IMR-90 (cell line): ENCODE measurements at regions of chr14 and their contacts with region 1.

Region 1: DNA sequence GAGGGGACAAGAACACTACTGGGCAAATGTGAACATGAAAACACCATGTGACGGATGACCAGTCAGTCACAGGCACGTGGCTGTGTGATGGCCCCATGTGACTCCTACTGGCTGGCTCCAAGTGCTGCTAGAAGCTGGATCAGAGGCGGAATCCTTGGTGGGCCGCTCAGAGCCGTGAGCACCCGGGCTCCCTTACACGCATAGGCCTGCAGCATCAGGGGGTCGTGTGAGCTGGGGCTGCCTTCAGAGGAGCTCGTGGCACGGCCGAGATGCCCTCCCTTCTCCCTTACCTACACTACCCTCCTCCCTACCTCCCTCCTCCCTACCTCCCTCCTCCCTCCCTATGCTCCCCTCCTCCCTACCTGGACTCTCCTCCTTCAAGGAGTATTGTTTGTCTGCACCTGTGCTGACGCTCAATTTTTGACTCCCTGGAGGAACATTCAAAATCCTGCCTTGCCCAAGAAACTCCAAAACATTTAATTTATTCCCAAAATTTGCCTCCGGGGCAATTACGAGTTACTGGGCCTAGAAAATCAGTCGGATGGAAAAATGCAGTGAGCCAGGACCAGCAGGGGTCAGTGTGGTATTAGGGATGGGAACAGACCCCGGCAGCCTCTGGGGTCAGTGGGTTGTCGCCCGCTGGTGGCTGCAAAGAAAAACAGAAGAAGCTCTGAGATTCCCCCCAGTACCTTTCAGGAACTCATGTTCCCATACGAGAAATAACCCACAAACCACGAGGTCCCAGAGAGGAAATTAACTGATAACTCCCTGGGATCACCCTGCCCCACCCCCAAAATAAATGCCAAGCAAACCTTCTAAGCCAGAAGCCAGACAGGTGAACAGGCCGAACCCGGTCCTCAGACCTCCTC is 61.2 kb downstream of the C14orf132 start:
- DNase-seq: peak; percentile 83
- ATAC-seq: peak; percentile 28
- H3K4me3 ChIP-seq: no peak overlapping the region
- H3K27ac ChIP-seq: peak overlapping the region; percentile 60
- H3K4me1 ChIP-seq: peaks cover 21% of the 10 kb centered on the region
- H3K27me3 ChIP-seq: no peaks in the 10 kb centered on the region
- CTCF ChIP-seq: peak; percentile 99
- POLR2A ChIP-seq: peak; percentile 76
- RAD21 ChIP-seq: peak; percentile 100

Region 2: DNA sequence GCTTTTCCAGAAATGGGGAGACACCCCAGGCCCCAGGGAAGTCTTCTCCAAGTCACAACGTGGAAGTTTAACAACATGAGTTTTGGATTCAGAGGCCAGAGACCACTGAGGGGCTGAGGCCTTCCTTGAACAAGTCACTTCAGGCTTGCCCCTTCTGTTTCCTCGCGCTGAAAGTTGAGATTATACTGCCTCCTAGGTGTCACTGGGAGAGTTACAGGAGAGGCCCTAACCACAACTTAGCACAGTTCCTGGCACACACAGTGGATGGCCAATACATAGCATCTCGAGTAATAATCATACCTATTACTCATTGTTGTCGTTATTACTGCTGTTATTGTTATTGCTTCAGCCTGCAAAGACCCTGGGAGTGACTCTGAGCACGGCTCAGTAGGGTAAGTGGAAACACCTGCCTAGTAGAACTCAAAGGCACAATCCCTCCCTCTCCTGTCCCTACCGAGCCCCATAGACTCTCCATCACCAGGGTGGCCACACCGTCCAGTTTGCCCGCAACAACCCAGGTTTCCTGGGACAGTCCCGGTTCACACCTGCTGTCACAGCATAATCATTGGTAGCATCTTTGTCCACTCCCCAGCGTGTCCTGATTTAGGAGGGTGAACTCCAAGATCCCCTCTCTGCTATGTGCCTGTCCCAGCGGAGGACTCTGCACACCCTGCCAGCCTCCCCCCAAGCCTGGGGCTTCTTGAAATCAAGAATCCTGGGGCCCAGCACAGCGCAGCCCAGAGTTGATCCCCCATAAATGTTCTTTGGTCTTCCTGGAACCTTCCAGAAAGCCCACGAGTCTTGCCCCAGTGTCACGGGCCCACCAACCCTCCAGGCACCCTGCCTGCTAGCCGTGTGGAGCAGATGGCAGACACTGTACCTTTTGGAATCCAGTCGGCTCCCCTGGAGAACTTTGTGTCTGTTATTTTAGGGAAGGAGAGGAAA is 668.9 kb before region 1 on chr14:
- CTCF ChIA-PET with region 1: no interaction called
- POLR2A ChIA-PET with region 1: no interaction called
- dilution Hi-C with region 1: no loop called
- in situ Hi-C with region 1: no loop called
- intact Hi-C with region 1: no loop called
- DNase-seq: peak; percentile 17
- ATAC-seq: no peak
- H3K4me3 ChIP-seq: no peak overlapping the region
- H3K27ac ChIP-seq: no peak overlapping the region
- H3K4me1 ChIP-seq: no peaks in the 10 kb centered on the region
- H3K27me3 ChIP-seq: no peaks in the 10 kb centered on the region
- CTCF ChIP-seq: peak; percentile 51
- POLR2A ChIP-seq: no peak
- RAD21 ChIP-seq: peak; percentile 37; the same call in 1 of the 2 replicates

Region 3: GRCh38 chr14:95993768-95994592 is 106.4 kb before region 1 on chr14:
- CTCF ChIA-PET with region 1: interaction called, 30 read pairs
- POLR2A ChIA-PET with region 1: no interaction called
- dilution Hi-C with region 1: no loop called
- in situ Hi-C with region 1: no loop called
- intact Hi-C with region 1: loop called (anchors 1 kb)
- DNase-seq: peak; percentile 53
- ATAC-seq: peak; percentile 82
- H3K4me3 ChIP-seq: no peak overlapping the region
- H3K27ac ChIP-seq: no peak overlapping the region
- H3K4me1 ChIP-seq: no peaks in the 10 kb centered on the region
- H3K27me3 ChIP-seq: peaks cover 18% of the 10 kb centered on the region
- CTCF ChIP-seq: peak; percentile 89
- POLR2A ChIP-seq: no peak
- RAD21 ChIP-seq: peak; percentile 88

Region 4: DNA sequence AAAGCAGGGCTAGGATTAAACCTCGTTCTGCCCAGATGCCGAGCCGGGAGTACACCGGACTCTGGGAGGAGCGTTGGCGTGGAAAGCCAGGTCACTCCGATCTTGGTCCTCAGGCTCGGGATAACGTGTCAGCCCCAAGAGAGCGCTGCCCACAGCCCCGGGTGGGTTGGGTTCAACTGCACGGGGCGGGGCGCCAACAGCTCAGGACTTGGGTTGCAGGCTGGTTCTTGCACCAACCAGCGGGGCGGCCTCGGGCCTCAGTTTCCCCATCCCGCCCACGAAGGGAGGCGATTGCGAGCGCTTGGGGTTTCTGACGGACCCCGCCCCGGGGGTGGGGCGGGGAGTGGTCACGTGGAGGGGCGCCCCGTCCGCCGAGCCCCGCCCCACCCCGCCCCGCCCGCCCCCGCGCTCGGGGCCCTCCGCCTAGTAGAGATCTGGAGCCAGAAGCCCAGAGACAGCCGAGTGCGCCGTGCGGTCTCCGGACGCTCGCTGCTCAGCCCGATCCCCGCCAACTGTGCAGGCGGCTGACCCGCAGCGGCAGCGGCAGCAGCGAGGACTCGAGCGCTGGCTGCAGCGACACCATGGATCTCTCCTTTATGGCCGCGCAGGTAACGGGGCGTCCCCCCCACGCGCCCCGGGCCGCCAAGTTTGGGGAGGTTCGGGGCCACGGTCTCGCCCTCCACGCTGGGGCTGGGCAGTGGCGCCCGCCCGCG is 61.3 kb before region 1 on chr14 and contains the start of gene C14orf132:
- CTCF ChIA-PET with region 1: interaction called, 4 read pairs
- POLR2A ChIA-PET with region 1: no interaction called
- dilution Hi-C with region 1: no loop called
- in situ Hi-C with region 1: loop called (anchors 5 kb)
- intact Hi-C with region 1: loop called (anchors 2 kb)
- DNase-seq: peak; percentile 48
- ATAC-seq: peak; percentile 93
- H3K4me3 ChIP-seq: peak within 1 kb of the TSS; percentile 98
- H3K27ac ChIP-seq: peak within 1 kb of the TSS; percentile 68
- H3K4me1 ChIP-seq: peaks cover 12% of the 10 kb centered on the region; the same call in 1 of the 2 replicates
- H3K27me3 ChIP-seq: peaks cover 12% of the 10 kb centered on the region; the same call in 1 of the 2 replicates
- CTCF ChIP-seq: no peak
- POLR2A ChIP-seq: peak; percentile 91
- RAD21 ChIP-seq: no peak
- total RNA-seq, gene C14orf132: 6.3 and 6.9 TPM in 2 replicates

Region 5: GRCh38 chr14:96204151-96205058 is 104.0 kb after region 1 on chr14 and contains the start of gene BDKRB2:
- CTCF ChIA-PET with region 1: interaction called, 3 read pairs
- POLR2A ChIA-PET with region 1: interaction called, 5 read pairs
- dilution Hi-C with region 1: no loop called
- in situ Hi-C with region 1: loop called (anchors 5 kb)
- intact Hi-C with region 1: loop called (anchors 1 kb)
- DNase-seq: peak; percentile 92
- ATAC-seq: peak; percentile 86
- H3K4me3 ChIP-seq: peak within 1 kb of the TSS; percentile 88
- H3K27ac ChIP-seq: peak within 1 kb of the TSS; percentile 97
- H3K4me1 ChIP-seq: peaks cover 22% of the 10 kb centered on the region
- H3K27me3 ChIP-seq: no peaks in the 10 kb centered on the region
- CTCF ChIP-seq: no peak
- POLR2A ChIP-seq: peak; percentile 93
- RAD21 ChIP-seq: peak; percentile 42
- total RNA-seq, gene BDKRB2: 60.5 and 73.1 TPM in 2 replicates

Region 6: GRCh38 chr14:96275177-96276112 is 175.1 kb after region 1 on chr14:
- CTCF ChIA-PET with region 1: interaction called, 55 read pairs
- POLR2A ChIA-PET with region 1: interaction called, 6 read pairs
- dilution Hi-C with region 1: no loop called
- in situ Hi-C with region 1: loop called (anchors 5 kb)
- intact Hi-C with region 1: loop called (anchors 1 kb)
- DNase-seq: peak; percentile 90
- ATAC-seq: peak; percentile 72
- H3K4me3 ChIP-seq: no peak overlapping the region
- H3K27ac ChIP-seq: peak overlapping the region; percentile 94
- H3K4me1 ChIP-seq: peaks cover 23% of the 10 kb centered on the region
- H3K27me3 ChIP-seq: no peaks in the 10 kb centered on the region
- CTCF ChIP-seq: peak; percentile 99
- POLR2A ChIP-seq: peak; percentile 61
- RAD21 ChIP-seq: peak; percentile 98